Endothelial cell of umbilical vein (primary cell): ENCODE measurements at regions of chr6 and their contacts with region 1.

Region 1: DNA sequence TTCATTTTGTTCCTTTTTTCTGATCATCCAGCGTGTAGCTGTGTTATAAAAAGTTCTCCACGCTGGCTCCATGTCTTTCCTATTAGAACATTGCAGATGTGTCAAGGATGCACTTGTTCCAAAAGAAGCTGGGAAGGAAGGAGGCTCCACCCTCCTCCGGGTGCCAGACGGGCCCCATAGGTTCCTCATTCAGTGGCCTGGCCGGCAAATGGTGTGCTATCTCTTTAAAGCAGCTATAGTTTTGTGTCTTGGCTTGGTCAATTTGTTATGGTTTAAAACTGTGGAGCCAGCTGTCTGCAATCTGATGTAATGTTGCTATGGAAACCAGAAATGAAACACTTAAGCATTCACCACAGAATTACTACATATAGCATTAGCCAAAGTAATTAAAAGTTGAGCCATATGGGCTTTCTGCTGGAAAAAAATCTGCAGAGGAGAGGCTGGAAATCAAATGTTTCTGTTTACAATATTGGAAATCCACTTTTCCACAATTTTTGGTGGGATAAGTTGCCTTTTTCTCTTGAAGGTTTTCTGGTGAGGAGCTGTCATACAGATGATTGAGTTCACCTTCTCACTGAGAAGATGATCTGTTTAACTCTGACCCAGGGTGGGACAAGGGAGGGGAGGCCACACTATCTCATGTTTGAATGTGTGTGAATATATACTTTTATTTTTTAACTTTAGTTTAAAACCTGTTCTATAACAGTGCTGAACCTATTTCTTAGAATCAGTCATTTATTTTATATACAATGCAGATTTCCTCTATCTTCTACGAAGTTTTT is 167.4 kb downstream of the SASH1 start:
- DNase-seq: peak; percentile 79
- H3K4me3 ChIP-seq: no peak overlapping the region
- H3K27ac ChIP-seq: no peak overlapping the region
- H3K4me1 ChIP-seq: peaks cover 22% of the 10 kb centered on the region
- H3K27me3 ChIP-seq: no peaks in the 10 kb centered on the region
- CTCF ChIP-seq: no peak
- POLR2A ChIP-seq: no peak

Region 2: DNA sequence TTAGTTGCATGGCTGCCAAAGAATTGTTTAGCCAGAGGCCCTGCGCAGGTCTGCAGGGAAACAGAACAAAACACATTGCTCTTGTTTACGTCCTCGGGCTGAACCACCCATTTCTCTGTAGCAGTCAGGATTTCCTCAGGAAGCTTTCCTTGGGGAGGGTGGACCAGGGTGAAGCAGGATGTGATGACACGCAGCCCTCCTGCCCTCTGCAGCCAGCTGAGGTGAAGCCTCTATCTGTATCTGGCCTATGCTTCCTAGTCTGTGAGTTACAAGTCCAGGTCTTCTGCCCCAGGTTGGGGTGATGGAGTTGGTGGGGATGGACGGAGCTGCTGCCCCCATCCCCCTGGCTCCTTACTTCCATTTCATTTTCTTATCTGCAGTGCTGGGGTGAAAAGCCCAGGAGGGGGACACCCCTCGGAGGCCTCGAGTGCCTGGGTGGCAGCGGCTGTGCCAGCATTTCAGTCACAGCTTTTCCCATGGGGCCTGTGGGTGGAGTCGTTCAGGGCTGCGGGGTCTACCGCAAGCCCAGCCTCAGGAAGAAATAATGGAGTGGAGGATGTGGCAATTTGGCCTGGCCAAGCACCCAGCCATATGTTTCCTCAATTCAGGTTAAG is 142.5 kb before region 1 on chr6:
- CTCF ChIA-PET with region 1: no interaction called
- POLR2A ChIA-PET with region 1: no interaction called
- dilution Hi-C with region 1: no loop called
- intact Hi-C with region 1: no loop called
- DNase-seq: peak; percentile 99
- H3K4me3 ChIP-seq: no peak overlapping the region
- H3K27ac ChIP-seq: peak overlapping the region; percentile 96
- H3K4me1 ChIP-seq: peaks cover 75% of the 10 kb centered on the region
- H3K27me3 ChIP-seq: no peaks in the 10 kb centered on the region
- CTCF ChIP-seq: no peak
- POLR2A ChIP-seq: no peak

Region 3: GRCh38 chr6:148520109-148520841 is 10.3 kb after region 1 on chr6:
- CTCF ChIA-PET with region 1: interaction called, 4 read pairs
- POLR2A ChIA-PET with region 1: no interaction called
- dilution Hi-C with region 1: no loop called
- intact Hi-C with region 1: loop called (anchors 2 kb)
- DNase-seq: no peak
- H3K4me3 ChIP-seq: no peak overlapping the region
- H3K27ac ChIP-seq: no peak overlapping the region
- H3K4me1 ChIP-seq: peaks cover 10% of the 10 kb centered on the region
- H3K27me3 ChIP-seq: no peaks in the 10 kb centered on the region
- CTCF ChIP-seq: no peak
- POLR2A ChIP-seq: no peak

Region 4: GRCh38 chr6:148538261-148539190 is 28.5 kb after region 1 on chr6:
- CTCF ChIA-PET with region 1: no interaction called
- POLR2A ChIA-PET with region 1: no interaction called
- dilution Hi-C with region 1: no loop called
- intact Hi-C with region 1: no loop called
- DNase-seq: no peak
- H3K4me3 ChIP-seq: no peak overlapping the region
- H3K27ac ChIP-seq: no peak overlapping the region
- H3K4me1 ChIP-seq: no peaks in the 10 kb centered on the region
- H3K27me3 ChIP-seq: no peaks in the 10 kb centered on the region
- CTCF ChIP-seq: no peak
- POLR2A ChIP-seq: no peak

Region 5: DNA sequence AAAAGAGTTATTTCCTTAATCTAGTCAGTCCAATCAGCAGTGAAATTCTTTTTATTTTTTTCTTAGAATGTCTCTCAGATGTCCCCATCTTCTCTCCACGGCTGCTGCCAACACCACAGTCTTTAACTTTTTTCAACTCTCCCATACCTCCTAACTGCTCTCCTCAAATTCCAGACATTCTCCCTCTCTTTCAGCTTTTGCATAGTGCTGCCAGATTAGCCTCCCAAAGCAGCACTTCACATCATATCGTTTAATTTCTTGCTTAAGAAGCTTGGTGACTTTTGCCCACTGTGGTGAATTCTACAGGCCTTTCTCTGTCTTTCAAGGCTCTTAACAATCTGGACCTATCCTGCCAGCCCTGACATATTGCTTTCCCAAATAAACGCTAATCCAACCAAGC is 470.2 kb after region 1 on chr6:
- CTCF ChIA-PET with region 1: no interaction called
- POLR2A ChIA-PET with region 1: no interaction called
- dilution Hi-C with region 1: no loop called
- intact Hi-C with region 1: no loop called
- DNase-seq: no peak
- H3K4me3 ChIP-seq: no peak overlapping the region
- H3K27ac ChIP-seq: no peak overlapping the region
- H3K4me1 ChIP-seq: no peaks in the 10 kb centered on the region
- H3K27me3 ChIP-seq: no peaks in the 10 kb centered on the region
- CTCF ChIP-seq: no peak
- POLR2A ChIP-seq: no peak